ENCODE measurements at regions of chr5 and their contacts with region 1.

Region 1: DNA sequence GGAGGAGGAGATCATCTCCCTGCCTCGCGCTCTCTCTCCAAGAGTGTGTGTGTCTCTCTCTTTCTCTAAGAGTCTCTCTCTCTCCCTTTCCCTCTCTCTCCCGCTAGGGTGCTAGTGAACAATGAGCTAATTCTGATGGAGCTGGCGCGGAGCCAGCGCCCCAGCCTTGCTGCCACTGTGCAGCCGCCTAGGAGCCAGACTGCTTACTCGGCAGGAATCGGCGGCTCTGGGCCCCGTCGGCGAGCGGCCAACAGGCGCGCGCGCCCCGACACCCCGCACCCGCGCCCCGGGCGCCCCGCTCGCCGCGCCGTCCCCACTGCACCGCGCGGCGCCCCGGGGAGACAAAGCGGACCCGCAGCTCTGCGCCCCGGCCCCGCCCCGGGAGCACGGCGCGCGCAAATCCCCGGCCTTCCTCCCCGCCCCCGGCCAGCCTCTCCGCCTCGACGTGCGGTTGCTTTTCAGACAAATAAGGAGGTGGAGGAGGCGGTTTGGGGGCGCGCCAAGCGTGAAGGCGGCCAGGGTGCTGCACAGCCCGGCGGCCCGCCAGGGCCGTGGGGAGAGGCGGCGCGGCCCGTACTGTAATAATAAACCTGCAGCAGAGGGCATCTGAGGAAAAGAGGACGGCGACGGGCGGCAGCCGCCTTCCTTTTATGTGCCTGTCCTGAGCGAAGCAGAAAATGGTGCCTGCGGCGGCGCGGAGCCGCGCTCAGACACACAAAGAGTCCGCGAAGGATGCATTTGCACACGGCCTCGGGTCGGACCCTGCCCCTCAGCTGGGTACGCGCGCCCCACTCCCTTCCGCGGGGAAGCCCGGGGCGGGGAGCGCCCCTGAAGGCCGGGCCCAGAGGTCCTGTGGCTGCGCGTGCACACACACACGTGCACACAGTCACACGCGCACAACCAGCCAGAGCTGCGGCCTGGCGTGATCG is 625 bp upstream of the NREP start:
- DNase-seq: peak; percentile 84
- H3K4me3 Mint-ChIP-seq: peak overlapping the region; percentile 87
- H3K27ac Mint-ChIP-seq: peak overlapping the region; percentile 86
- H3K4me1 Mint-ChIP-seq: peaks cover 29% of the 10 kb centered on the region
- H3K27me3 Mint-ChIP-seq: peaks cover 4% of the 10 kb centered on the region

Region 2: GRCh38 chr5:110738812-110739651 is 1018.6 kb before region 1 on chr5 and contains the start of gene SLC25A46:
- intact Hi-C with region 1: loop called (anchors 1 kb)
- DNase-seq: peak; percentile 85
- H3K4me3 Mint-ChIP-seq: peak within 1 kb of the TSS; percentile 97
- H3K27ac Mint-ChIP-seq: peak within 1 kb of the TSS; percentile 96
- H3K4me1 Mint-ChIP-seq: peaks cover 39% of the 10 kb centered on the region
- H3K27me3 Mint-ChIP-seq: peaks cover 11% of the 10 kb centered on the region
- total RNA-seq, gene SLC25A46: 54.6 and 55.4 TPM in 2 replicates

Region 3: GRCh38 chr5:111158105-111158744 is 599.4 kb before region 1 on chr5:
- intact Hi-C with region 1: loop called (anchors 5 kb)
- DNase-seq: peak; percentile 62
- H3K4me3 Mint-ChIP-seq: no peak overlapping the region
- H3K27ac Mint-ChIP-seq: no peak overlapping the region
- H3K4me1 Mint-ChIP-seq: peaks cover 4% of the 10 kb centered on the region
- H3K27me3 Mint-ChIP-seq: no peaks in the 10 kb centered on the region

Region 4: GRCh38 chr5:111337688-111338087 is 419.9 kb before region 1 on chr5:
- intact Hi-C with region 1: loop called (anchors 10 kb)
- DNase-seq: no peak
- H3K4me3 Mint-ChIP-seq: no peak overlapping the region
- H3K27ac Mint-ChIP-seq: peak overlapping the region; percentile 61
- H3K4me1 Mint-ChIP-seq: peaks cover 11% of the 10 kb centered on the region
- H3K27me3 Mint-ChIP-seq: no peaks in the 10 kb centered on the region

Region 5: DNA sequence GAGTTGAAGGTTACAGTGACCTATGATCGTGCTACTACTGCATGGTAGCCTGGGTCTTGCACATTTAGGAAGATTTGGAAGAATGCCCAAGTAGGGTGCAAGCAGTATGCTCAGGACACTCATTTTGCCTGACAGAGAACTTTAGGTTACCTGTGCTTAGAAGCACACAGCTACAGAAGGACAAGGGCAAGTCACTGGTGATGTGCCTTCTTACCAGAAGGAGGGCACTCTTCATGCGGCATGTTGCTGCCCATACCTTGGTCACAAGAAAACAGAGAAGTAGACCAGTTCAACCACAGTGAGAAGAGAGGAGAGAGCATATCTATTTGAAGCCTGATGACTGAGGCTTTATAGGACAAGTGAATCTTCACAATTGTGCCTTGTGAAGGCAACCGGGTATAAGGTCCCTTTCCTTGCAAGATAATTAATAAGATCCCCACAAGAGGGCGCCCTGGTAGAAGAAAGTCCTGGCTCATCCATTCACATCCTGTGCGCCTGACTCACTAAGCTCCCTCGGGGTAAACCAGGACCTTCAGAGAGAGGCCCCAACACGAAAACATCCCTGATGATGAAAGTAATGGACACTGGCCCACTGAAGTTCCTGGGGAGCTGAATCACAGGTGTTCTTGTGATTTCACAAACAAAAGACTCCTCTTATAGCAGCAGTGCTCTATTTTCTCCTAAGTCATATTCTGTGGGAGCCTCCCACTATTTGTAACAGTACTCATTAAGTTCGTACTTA is 207.2 kb before region 1 on chr5:
- intact Hi-C with region 1: loop called (anchors 1 kb)
- DNase-seq: peak; percentile 59
- H3K4me3 Mint-ChIP-seq: no peak overlapping the region
- H3K27ac Mint-ChIP-seq: peak overlapping the region; percentile 40
- H3K4me1 Mint-ChIP-seq: peaks cover 45% of the 10 kb centered on the region
- H3K27me3 Mint-ChIP-seq: peaks cover 3% of the 10 kb centered on the region

Region 6: GRCh38 chr5:111968459-111968858 is 210.8 kb after region 1 on chr5:
- intact Hi-C with region 1: no loop called
- DNase-seq: no peak
- H3K4me3 Mint-ChIP-seq: no peak overlapping the region
- H3K27ac Mint-ChIP-seq: no peak overlapping the region
- H3K4me1 Mint-ChIP-seq: no peaks in the 10 kb centered on the region
- H3K27me3 Mint-ChIP-seq: peaks cover 2% of the 10 kb centered on the region

Region 7: DNA sequence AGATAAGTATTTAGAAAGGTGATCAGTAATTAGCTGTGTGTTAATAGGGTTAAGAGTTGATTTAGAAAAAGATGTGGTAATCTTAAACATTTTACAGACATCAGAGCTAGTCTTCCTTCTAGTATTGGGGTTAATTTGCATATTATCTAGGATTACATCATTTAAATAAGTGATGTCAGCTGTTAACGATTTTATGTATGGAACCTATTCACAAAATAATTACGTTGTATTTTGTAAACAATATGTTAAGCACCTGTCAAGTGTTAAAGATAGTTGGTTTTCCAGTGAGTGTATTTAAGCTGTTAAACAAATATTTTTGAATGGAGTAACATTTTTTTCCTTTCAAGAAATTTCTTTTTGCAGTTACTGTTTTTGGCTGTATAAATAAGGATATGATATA is 1221.2 kb after region 1 on chr5:
- intact Hi-C with region 1: no loop called
- DNase-seq: no peak
- H3K4me3 Mint-ChIP-seq: peak overlapping the region; percentile 93
- H3K27ac Mint-ChIP-seq: no peak overlapping the region
- H3K4me1 Mint-ChIP-seq: peaks cover 48% of the 10 kb centered on the region
- H3K27me3 Mint-ChIP-seq: no peaks in the 10 kb centered on the region